HEK293 (cell line): ENCODE measurements at regions of chr11 and their contacts with region 1.

Region 1: DNA sequence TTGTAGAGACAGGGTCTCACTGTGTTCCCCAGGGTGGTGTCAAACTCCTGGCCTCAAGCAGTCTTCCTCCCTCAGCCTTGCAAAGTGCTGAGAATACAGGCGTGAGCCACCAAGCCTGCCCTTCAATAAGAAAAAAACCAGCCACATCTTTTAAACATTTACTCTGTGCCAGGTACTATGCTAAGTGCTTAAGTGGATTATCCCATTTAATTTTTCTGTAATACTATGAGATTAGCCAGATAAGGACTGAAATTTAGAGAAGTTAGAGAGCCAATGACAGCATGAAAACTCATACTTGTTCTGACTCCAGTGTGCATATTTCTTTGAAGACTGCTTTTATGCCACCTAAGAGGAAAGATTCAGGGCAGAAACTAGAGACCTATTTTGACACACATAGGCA is 35.7 kb downstream of the PPME1 start:
- H3K4me3 ChIP-seq: no peak overlapping the region
- H3K27ac ChIP-seq: no peak overlapping the region
- H3K4me1 ChIP-seq: no peaks in the 10 kb centered on the region
- CTCF ChIP-seq: no peak

Region 2: DNA sequence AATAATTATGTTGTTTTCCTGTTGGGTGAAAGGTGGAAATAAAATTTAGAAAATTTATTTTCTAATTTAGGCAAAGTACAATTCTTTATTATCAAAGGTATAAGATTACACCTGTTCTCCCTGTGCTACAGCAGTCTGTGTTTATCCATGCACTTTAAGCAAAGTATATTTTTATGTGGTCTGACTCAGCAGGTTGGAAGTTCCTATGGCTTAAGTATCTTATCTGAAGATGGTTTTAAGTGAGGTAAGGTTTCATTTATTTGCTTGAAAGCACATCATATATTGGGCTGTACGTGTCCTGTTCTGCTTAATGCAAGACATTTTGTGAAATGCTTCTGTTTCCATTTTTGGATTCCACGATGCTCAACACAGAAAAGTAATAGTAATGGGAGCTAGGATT is 21.1 kb before region 1 on chr11:
- CTCF ChIA-PET with region 1: no interaction called
- POLR2A ChIA-PET with region 1: interaction called, 15 read pairs
- H3K4me3 ChIP-seq: no peak overlapping the region
- H3K27ac ChIP-seq: no peak overlapping the region
- H3K4me1 ChIP-seq: peaks cover 10% of the 10 kb centered on the region; the same call in 1 of the 2 replicates
- CTCF ChIP-seq: no peak

Region 3: DNA sequence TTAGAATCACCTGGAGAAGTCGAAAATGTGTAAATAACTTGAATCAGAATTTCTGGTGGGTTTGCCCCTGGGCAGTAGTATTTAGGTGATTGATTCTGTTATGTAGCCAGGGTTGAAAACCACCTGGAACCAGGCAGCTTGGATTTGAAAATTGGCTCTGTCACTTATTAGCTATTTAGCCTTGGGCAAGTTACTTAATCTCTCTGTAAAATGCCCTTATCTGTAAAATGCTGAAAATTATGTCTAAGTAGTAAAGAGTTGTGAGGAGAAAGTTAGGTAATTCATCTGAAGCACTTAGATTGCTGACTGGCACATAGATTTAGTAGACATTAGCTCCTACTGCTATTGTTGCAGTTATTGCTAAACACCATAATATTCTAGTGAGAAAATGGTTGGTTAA is 13.6 kb after region 1 on chr11:
- CTCF ChIA-PET with region 1: no interaction called
- POLR2A ChIA-PET with region 1: no interaction called
- H3K4me3 ChIP-seq: no peak overlapping the region
- H3K27ac ChIP-seq: no peak overlapping the region
- H3K4me1 ChIP-seq: no peaks in the 10 kb centered on the region
- CTCF ChIP-seq: no peak